ENCODE measurements at regions of chr9 and their contacts with region 1.

Region 1: DNA sequence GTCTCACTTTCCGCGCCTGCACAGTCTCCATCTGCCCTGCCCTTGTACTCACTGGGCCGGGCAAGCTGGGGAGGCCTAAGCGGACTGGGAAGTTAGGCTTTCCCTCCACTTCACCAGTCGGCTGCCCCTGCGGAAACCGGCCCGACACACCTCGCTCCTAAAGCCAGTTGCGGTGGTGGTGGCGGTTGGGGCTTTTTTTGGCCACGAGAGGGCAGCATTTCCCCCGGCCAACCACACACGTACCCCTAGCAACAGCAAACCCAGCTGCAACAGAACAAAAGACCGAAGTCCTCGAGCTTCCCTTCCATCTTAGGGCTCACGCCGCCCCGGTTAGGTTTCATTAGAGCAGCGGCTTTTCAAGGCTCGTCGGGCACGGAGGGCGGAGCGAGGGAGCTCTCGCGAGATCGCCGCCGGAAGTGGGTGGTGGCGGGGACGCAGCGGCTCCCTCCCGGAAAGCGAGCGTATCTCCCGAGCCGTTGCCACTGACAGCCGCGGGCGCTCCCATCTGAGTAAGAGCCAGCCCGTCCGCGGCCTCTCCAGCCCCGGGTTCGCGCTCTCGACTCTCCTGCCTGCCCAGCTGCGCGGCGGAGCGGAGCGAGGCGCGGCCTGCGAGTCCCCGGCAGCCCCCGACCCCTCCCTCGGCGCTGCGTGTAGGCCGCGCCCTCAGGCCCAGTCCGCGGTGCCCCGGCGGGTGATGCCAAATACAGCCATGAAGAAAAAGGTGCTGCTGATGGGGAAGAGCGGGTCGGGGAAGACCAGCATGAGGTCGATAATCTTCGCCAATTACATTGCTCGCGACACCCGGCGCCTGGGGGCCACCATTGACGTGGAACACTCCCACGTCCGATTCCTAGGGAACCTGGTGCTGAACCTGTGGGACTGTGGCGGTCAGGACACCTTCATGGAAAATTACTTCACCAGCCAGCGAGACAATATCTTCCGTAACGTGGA is at the start of gene RRAGA:
- DNase-seq: peak; percentile 96
- H3K4me3 Mint-ChIP-seq: peak within 1 kb of the TSS; percentile 82
- H3K27ac Mint-ChIP-seq: peak within 1 kb of the TSS; percentile 96
- H3K4me1 Mint-ChIP-seq: peaks cover 6% of the 10 kb centered on the region
- H3K27me3 Mint-ChIP-seq: no peaks in the 10 kb centered on the region
- CTCF ChIP-seq: peak; percentile 83
- total RNA-seq, gene RRAGA: 44.0 and 50.3 TPM in 2 replicates

Region 2: DNA sequence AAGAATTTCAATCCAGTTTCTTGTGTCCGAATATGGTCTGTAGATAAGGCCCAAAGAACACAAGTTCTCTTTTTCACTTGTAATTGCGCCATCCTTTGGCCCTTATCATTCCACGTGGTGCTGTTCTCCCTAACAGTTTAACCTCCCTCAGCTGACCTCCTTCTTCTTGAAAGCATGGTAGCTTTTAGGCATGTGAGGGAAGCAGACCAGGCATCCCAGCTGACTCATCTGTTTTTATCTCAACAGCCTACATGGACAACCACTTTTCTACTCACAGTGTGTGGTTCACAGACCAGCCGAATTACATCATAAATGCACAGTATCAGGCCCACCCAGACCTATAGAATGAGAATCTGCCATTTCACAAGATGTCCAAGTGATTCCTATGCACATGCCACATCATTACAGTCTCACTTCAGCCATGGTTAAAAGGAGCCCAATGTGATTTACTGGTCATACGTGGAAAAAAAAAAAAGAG is 104.9 kb after region 1 on chr9:
- CTCF ChIA-PET with region 1: interaction called, 5 read pairs
- POLR2A ChIA-PET with region 1: interaction called, 28 read pairs
- intact Hi-C with region 1: no loop called
- DNase-seq: peak; percentile 14
- H3K4me3 Mint-ChIP-seq: no peak overlapping the region
- H3K27ac Mint-ChIP-seq: no peak overlapping the region
- H3K4me1 Mint-ChIP-seq: peaks cover 7% of the 10 kb centered on the region
- H3K27me3 Mint-ChIP-seq: no peaks in the 10 kb centered on the region
- CTCF ChIP-seq: no peak

Region 3: DNA sequence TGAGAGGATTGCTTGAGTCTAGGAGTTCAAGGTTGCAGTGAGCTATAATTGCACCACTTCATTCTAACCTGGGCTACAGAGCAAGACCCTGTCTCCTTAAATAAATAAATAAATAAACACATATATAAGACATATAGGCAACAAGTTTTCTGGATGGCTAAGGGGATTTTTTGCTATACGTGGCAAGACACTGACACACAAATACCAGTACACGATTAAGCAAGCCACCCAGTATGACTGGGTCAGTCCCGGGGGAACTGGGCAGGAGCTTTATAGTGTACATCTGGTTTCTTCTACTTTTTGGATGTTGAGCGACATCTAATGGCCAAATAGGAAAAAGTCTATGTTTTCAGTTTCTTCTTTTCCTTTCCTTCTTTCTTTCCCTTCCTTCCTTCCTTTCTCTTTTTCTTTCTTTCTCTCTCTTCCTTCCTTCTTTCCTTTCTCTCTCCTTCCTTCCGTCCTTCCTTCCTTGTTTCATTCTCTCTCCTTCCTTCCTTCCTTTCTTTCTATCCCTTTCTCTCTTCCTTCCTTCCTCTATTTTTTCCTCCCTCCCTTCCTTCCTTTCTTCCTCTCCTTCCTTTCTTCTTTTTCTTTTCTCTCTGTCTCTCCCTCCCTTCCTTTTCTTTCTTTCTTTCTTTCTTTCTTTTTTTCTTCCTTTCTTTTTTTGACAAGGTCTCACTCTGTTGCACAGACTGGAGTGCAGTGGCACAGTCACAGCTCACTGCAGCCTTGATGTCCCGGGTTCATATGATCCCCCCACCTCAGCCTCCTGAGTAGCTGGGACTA is 125.1 kb after region 1 on chr9:
- CTCF ChIA-PET with region 1: interaction called, 36 read pairs
- POLR2A ChIA-PET with region 1: interaction called, 19 read pairs
- intact Hi-C with region 1: loop called (anchors 1 kb)
- DNase-seq: peak; percentile 89
- H3K4me3 Mint-ChIP-seq: no peak overlapping the region
- H3K27ac Mint-ChIP-seq: no peak overlapping the region
- H3K4me1 Mint-ChIP-seq: peaks cover 7% of the 10 kb centered on the region
- H3K27me3 Mint-ChIP-seq: no peaks in the 10 kb centered on the region
- CTCF ChIP-seq: peak; percentile 56

Region 4: GRCh38 chr9:19230356-19231125 is 181.3 kb after region 1 on chr9 and contains the start of gene DENND4C:
- CTCF ChIA-PET with region 1: interaction called, 4 read pairs
- POLR2A ChIA-PET with region 1: interaction called, 49 read pairs
- intact Hi-C with region 1: loop called (anchors 2 kb)
- DNase-seq: peak; percentile 91
- H3K4me3 Mint-ChIP-seq: no peak within 1 kb of the TSS
- H3K27ac Mint-ChIP-seq: no peak within 1 kb of the TSS
- H3K4me1 Mint-ChIP-seq: peaks cover 12% of the 10 kb centered on the region
- H3K27me3 Mint-ChIP-seq: no peaks in the 10 kb centered on the region
- CTCF ChIP-seq: no peak
- total RNA-seq, gene DENND4C: 26.4 and 36.4 TPM in 2 replicates

Region 5: GRCh38 chr9:19456996-19457692 is 407.9 kb after region 1 on chr9:
- CTCF ChIA-PET with region 1: interaction called, 6 read pairs
- POLR2A ChIA-PET with region 1: interaction called, 4 read pairs
- intact Hi-C with region 1: loop called (anchors 1 kb)
- DNase-seq: peak; percentile 80
- H3K4me3 Mint-ChIP-seq: peak overlapping the region; percentile 33
- H3K27ac Mint-ChIP-seq: no peak overlapping the region
- H3K4me1 Mint-ChIP-seq: no peaks in the 10 kb centered on the region
- H3K27me3 Mint-ChIP-seq: no peaks in the 10 kb centered on the region
- CTCF ChIP-seq: peak; percentile 91